CD14-positive monocyte (primary cell): ENCODE measurements at regions of chr3 and their contacts with region 1.

Region 1: DNA sequence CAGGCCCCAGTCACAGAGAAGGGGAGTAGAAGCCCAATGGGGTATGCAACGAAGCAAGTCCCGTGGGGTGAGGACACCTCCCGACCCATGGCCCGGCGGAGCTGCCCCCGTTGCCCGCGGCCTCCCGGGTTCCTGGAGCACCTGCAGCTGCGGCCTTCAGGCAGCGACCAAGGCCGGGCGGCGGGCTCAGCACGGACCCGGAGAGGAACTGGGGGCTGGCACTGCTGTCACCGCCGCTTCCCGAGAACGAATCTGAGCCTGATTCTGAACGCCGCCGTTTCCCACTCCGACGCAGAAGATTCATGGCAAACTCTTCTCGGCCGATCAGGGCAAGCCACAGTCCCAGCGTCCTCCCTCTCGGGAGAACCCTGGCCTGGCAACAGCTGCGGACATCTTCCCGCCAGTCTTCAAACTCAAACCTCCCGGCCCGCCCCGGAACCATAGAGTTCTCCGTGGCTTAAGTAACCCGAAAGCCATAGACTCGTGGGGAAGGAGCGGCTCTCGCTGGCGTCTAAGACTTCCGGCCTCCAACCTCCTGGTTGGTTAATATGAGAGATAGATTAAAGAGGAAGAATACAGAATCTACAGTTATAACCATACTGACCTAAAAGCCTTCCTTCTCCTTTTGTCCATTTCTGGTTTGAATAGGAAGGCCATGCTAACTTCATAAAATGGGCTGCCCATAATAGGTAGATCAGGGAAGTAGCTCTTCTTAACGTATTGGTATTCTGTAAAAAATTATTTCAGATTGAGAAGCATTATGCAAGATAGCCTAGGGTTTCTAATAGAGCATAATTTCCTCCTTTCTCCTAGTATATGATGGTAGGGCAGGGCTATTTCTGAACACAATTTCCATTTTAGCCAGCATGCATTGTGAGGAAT is at the start of gene POLQ:
- DNase-seq: peak; percentile 86 to 95 (median 93)
- H3K4me3 ChIP-seq: peak within 1 kb of the TSS; percentile 82 to 99 (median 88)
- H3K4me3 Mint-ChIP-seq: peak within 1 kb of the TSS; percentile 92
- H3K27ac ChIP-seq: peak within 1 kb of the TSS; percentile 47 to 82
- H3K27ac Mint-ChIP-seq: peak within 1 kb of the TSS; percentile 85 to 96 (median 94)
- H3K4me1 ChIP-seq: peaks cover 31 to 39% of the 10 kb centered on the region in 2 donors
- H3K4me1 Mint-ChIP-seq: peaks cover 21% of the 10 kb centered on the region
- H3K27me3 ChIP-seq: no peaks in the 10 kb centered on the region
- H3K27me3 Mint-ChIP-seq: peaks cover 0 to 2% (median 0%) of the 10 kb centered on the region in 3 donors
- CTCF ChIP-seq: no peak
- polyA plus RNA-seq, gene POLQ: 0.03 TPM in 2 of 3 donors, not detected in the other

Region 2: DNA sequence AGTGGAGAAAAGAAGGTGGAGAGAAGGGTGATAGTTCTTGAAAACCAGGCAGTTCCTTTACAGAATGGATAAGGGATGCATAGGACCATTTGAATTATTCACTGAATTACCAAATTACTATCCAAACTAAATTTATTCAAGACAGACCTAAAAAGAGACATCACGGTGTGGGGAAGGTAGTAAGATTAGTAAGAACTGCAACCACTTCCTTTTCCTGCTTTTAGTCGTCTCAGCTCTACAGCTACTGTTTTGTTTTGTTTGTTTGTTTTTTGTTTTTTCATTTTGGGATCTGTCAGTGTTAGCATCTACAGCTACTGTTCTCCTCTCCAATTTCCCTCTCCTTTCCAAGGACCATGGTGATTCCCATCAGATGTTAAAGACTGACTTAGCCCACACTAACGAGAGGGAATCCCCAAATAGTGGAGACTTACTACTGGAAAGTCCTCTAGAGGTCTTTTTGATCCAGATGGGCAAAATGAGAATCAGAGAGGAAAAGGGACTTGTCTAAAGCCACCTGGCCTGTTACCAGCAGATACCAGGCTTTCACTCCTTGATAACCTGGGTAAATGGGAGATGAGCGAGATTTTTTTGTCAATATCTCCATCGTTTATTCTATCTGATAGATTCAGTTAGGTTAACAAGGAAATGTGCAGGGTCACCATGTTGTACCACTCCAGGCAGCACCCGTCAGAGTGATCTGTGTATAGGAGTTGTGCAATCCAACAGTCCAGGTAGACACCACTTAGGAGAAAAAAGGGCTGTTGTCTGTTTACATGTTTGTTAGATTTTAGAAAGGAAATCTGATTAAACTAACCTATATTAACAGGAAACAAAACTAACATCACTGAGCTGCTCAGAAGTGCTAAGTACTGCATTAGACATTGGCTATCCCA is 108.9 kb after region 1 on chr3:
- intact Hi-C with region 1: loop called in 1 of 2 experiments (anchors 10 kb)
- DNase-seq: no peak
- H3K4me3 ChIP-seq: no peak overlapping the region
- H3K4me3 Mint-ChIP-seq: no peak overlapping the region
- H3K27ac ChIP-seq: peak overlapping the region in 1 of 2 donors; percentile 74
- H3K27ac Mint-ChIP-seq: peak overlapping the region in 6 of 7 donors; percentile 15 to 80 (median 62)
- H3K4me1 ChIP-seq: peaks cover 21 to 35% of the 10 kb centered on the region in 2 donors
- H3K4me1 Mint-ChIP-seq: peaks cover 41% of the 10 kb centered on the region
- H3K27me3 ChIP-seq: no peaks in the 10 kb centered on the region
- H3K27me3 Mint-ChIP-seq: no peaks in the 10 kb centered on the region
- CTCF ChIP-seq: no peak

Region 3: DNA sequence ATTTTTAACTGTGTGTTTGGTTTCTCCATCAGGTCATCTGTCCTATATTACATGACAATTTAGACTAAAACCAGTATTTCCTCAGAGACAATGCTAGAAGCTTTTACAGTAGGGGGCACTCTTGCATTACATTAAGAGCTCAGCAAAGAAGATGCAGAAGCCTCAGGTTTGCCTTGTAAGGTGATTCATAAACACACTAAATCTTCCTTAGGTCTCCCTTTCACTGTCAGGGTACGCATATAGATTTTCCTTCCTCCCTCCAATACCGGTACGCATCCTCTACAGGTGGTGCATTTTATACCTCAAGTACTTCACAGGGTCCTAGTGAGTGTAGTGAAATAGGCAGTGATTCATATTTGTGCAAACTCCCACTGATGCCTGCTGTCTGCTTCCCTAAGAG is 555.8 kb after region 1 on chr3:
- intact Hi-C with region 1: loop called in 1 of 2 experiments (anchors 10 kb)
- DNase-seq: peak; percentile 53 to 68 (median 66)
- H3K4me3 ChIP-seq: peak overlapping the region in 1 of 3 experiments; percentile 3
- H3K4me3 Mint-ChIP-seq: peak overlapping the region in 1 of 2 donors; percentile 1
- H3K27ac ChIP-seq: peak overlapping the region in 1 of 2 donors; percentile 58
- H3K27ac Mint-ChIP-seq: peak overlapping the region; percentile 34 to 92 (median 76)
- H3K4me1 ChIP-seq: peaks cover 39 to 42% of the 10 kb centered on the region in 2 donors
- H3K4me1 Mint-ChIP-seq: peaks cover 35% of the 10 kb centered on the region
- H3K27me3 ChIP-seq: no peaks in the 10 kb centered on the region
- H3K27me3 Mint-ChIP-seq: no peaks in the 10 kb centered on the region
- CTCF ChIP-seq: peak; percentile 65

Region 4: DNA sequence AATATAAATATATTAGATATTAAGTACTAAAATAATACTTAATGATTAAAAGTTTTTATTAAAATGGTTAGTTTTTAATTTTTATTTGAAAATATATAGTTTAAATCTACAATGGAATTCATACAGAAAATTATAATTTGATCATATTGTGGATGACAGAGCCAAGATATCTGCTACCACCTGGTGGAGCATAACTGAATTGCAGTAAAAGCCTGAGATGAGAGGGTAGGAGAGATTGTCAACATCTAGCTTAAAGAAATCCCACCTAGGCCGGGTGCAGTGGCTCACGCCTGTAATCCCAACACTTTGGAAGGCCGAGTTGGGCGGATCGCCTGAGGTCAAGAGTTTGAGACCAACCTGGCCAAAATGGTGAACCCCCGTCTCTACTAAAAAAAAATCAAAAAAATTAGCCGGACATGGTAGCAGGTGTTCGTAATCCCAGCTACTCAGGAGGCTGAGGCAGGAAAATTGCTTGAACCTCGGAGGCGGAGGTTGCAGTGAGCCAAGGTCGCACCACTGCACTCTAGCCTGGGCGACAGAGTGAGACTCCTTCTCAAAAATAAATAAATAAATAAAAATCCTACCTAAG is 754.2 kb after region 1 on chr3:
- intact Hi-C with region 1: loop called in 1 of 2 experiments (anchors 5 kb)
- DNase-seq: peak; percentile 41 to 67 (median 54)
- H3K4me3 ChIP-seq: no peak overlapping the region
- H3K4me3 Mint-ChIP-seq: no peak overlapping the region
- H3K27ac ChIP-seq: no peak overlapping the region
- H3K27ac Mint-ChIP-seq: no peak overlapping the region
- H3K4me1 ChIP-seq: peaks cover 20 to 41% of the 10 kb centered on the region in 2 donors
- H3K4me1 Mint-ChIP-seq: peaks cover 16% of the 10 kb centered on the region
- H3K27me3 ChIP-seq: no peaks in the 10 kb centered on the region
- H3K27me3 Mint-ChIP-seq: no peaks in the 10 kb centered on the region
- CTCF ChIP-seq: peak; percentile 83

Region 5: DNA sequence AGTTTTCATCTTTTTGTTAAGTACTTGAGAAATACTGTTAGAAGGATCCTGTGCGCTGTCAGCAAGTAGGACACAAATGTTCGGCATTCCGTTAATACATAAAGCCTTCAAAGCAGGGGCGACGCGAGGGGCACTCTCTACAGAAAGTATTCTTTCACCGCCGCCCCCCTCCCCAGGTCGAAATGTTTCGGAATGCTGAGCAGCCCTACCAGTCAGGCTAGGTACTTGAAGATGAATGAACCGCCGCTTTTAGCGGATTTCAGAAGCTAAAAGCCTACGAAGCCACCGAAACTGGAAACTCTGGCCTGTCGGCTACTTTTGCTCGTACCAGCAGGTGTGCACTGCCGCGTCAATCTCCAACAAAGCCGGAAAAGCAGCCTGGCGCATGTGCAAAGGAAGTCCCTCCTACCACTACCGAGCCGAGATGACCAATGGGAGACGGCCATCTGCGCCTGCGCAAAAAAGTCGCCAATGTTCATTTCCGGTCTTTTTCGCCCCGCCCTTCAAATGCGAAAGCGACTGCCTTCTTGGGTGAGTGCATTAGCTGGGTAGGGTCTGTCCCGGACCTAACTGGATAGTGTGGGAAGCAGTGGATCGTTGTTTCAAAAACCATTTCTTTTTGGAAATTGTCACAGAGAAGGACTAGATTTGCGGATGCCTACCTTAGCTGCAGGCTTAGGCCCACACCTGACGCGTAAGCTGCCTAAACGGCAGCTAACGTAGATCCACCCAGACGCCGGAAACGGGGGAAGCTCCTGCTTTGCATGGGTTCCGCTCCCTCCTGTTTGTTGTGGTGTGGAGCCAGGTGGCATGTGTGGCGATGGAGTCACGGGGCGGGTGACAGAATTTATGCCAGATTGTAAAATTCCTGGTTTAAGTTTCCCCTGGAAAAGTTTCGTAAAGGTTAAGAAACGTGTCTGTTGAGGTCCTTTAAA is 870.2 kb after region 1 on chr3 and contains the start of gene WDR5B:
- intact Hi-C with region 1: loop called (anchors 10 kb)
- DNase-seq: peak; percentile 95 to 97 (median 96)
- H3K4me3 ChIP-seq: peak within 1 kb of the TSS; percentile 73 to 97 (median 94)
- H3K4me3 Mint-ChIP-seq: peak within 1 kb of the TSS; percentile 93 to 95
- H3K27ac ChIP-seq: peak within 1 kb of the TSS; percentile 79 to 92
- H3K27ac Mint-ChIP-seq: peak within 1 kb of the TSS; percentile 94 to 98 (median 95)
- H3K4me1 ChIP-seq: peaks cover 16 to 25% of the 10 kb centered on the region in 2 donors
- H3K4me1 Mint-ChIP-seq: peaks cover 33% of the 10 kb centered on the region
- H3K27me3 ChIP-seq: no peaks in the 10 kb centered on the region
- H3K27me3 Mint-ChIP-seq: no peaks in the 10 kb centered on the region
- CTCF ChIP-seq: no peak
- polyA plus RNA-seq, gene WDR5B: 0.85 to 3.1 (median 0.85) TPM

Region 6: GRCh38 chr3:122679085-122679881 is 1133.5 kb after region 1 on chr3:
- intact Hi-C with region 1: loop called in 1 of 2 experiments (anchors 10 kb)
- DNase-seq: peak; percentile 57 to 77 (median 73)
- H3K4me3 ChIP-seq: peak overlapping the region; percentile 27 to 97 (median 78)
- H3K4me3 Mint-ChIP-seq: peak overlapping the region; percentile 83 to 92
- H3K27ac ChIP-seq: peak overlapping the region; percentile 89 to 96
- H3K27ac Mint-ChIP-seq: peak overlapping the region; percentile 90 to 98 (median 96)
- H3K4me1 ChIP-seq: peaks cover 48 to 52% of the 10 kb centered on the region in 2 donors
- H3K4me1 Mint-ChIP-seq: peaks cover 55% of the 10 kb centered on the region
- H3K27me3 ChIP-seq: no peaks in the 10 kb centered on the region
- H3K27me3 Mint-ChIP-seq: no peaks in the 10 kb centered on the region
- CTCF ChIP-seq: peak; percentile 81